Sigmoid colon (tissue), 7 donors: ENCODE measurements at regions of chr4 and their contacts with region 1.

Region 1: DNA sequence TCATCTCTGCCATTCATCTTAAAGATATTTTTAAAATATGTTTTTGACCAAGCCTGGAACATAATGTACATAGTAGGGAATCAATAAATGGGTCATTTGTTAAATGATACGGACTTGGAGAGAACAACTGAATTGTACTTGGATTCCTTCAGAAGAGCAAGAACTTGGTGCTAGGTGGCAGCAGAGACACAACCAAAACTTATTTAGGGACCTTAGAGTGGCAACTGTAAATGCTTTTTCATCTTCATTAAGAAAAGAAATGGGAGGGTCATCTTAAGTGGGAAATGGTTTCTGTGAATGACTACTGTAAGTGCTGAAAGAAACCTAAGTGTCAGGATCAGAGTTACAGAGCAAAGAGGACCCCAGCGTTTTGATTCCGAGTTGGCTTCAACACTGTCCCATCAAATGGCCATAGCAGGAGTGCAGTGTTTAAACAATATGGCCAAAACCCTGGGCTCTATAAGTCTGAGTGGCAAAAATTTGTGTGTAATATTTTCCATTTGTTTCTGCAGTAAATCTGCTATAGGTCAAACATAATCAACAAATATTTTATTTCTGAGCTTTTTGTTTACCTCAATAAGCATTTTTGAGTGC is 213.6 kb downstream of the PALLD start:
- DNase-seq: no peak
- H3K4me3 ChIP-seq: no peak overlapping the region
- H3K27ac ChIP-seq: peak overlapping the region; percentile 68 to 91 (median 83)
- H3K4me1 ChIP-seq: peaks cover 0 to 35% (median 28%) of the 10 kb centered on the region in 4 donors
- H3K27me3 ChIP-seq: no peaks in the 10 kb centered on the region
- CTCF ChIP-seq: peak; percentile 57 to 68 (median 64)
- EP300 ChIP-seq: no peak
- POLR2A ChIP-seq: no peak

Region 2: DNA sequence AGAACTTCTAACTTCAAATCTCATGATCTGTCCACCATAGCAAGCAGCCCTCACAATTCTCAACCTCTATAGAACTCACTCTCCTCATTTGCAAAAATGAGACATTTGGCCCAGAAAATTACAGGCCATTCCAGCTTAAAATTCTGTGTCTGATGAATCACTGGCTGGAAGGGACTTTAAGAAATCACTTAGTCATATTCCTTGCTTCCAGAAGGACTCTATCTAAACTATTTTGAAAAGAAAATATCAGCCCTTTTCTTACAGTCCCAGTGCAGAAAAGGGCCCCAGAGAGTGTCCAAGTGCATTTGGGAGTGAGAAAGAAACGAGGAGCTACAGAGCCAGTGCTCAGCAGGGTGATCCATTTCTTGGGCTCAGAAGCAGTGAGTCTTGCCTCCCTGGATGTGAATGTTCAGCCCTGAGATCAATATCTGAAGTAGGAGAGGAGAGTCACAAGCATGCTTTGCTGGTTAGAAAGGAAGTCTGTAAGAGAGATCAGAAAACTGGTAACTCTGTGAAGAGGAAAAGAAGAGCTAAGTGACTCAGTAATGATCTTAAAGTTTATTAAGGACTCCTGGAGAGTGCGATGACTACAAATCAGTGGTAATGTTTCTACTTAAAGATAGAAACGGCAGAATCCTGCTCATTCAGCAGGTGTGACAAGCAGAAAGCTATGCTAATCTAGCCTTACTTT is 73.8 kb before region 1 on chr4:
- intact Hi-C with region 1: loop called (anchors 5 kb)
- DNase-seq: no peak
- H3K4me3 ChIP-seq: no peak overlapping the region
- H3K27ac ChIP-seq: peak overlapping the region; percentile 44 to 93 (median 62)
- H3K4me1 ChIP-seq: peaks cover 0 to 52% (median 39%) of the 10 kb centered on the region in 4 donors
- H3K27me3 ChIP-seq: no peaks in the 10 kb centered on the region
- CTCF ChIP-seq: no peak
- EP300 ChIP-seq: no peak
- POLR2A ChIP-seq: no peak

Region 3: GRCh38 chr4:168831919-168832762 is 121.7 kb after region 1 on chr4:
- intact Hi-C with region 1: loop called (anchors 2 kb)
- DNase-seq: peak; percentile 96
- H3K4me3 ChIP-seq: peak overlapping the region; percentile 76 to 97 (median 90)
- H3K27ac ChIP-seq: peak overlapping the region; percentile 94 to 99 (median 98)
- H3K4me1 ChIP-seq: peaks cover 0 to 33% (median 20%) of the 10 kb centered on the region in 4 donors
- H3K27me3 ChIP-seq: no peaks in the 10 kb centered on the region
- CTCF ChIP-seq: no peak
- EP300 ChIP-seq: peak in 3 of 4 donors; percentile 38 to 78 (median 66)
- POLR2A ChIP-seq: peak; percentile 96 to 98

Region 4: DNA sequence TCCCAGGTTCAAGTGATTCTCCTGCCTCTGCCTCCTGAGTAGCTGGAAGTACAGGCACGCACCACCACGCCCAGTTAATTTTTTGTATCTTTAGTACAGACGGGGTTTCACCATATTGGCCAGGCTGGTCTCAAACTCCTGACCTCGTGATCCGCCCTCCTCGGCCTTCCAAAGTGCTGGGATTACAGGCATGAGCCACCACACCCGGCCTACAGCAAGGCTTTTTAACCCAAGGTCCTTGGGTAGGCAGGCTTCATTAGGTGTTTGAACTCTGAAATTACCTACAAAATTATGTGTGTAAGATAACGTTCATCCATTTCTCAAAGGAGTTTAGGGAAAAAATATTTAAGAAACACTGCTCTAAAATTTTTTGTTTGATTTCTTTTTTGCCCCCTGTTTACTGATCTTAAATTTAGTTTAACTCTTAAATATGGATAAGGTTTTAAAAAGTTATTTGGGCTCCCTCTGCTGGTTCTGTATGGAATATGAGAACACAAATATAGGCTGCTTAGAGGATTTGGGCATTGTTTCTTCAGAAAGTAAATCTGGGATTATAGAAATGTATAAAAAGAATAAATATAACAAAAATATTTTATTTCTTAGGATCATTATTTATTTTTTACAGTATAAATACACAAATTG is 206.8 kb after region 1 on chr4:
- intact Hi-C with region 1: loop called (anchors 1 kb)
- DNase-seq: no peak
- H3K4me3 ChIP-seq: no peak overlapping the region
- H3K27ac ChIP-seq: peak overlapping the region; percentile 30 to 76 (median 64)
- H3K4me1 ChIP-seq: peaks cover 0 to 43% (median 38%) of the 10 kb centered on the region in 4 donors
- H3K27me3 ChIP-seq: no peaks in the 10 kb centered on the region
- CTCF ChIP-seq: peak; percentile 40 to 51 (median 44)
- EP300 ChIP-seq: no peak
- POLR2A ChIP-seq: no peak